ENCODE measurements at regions of chr5 and their contacts with region 1.

Region 1: DNA sequence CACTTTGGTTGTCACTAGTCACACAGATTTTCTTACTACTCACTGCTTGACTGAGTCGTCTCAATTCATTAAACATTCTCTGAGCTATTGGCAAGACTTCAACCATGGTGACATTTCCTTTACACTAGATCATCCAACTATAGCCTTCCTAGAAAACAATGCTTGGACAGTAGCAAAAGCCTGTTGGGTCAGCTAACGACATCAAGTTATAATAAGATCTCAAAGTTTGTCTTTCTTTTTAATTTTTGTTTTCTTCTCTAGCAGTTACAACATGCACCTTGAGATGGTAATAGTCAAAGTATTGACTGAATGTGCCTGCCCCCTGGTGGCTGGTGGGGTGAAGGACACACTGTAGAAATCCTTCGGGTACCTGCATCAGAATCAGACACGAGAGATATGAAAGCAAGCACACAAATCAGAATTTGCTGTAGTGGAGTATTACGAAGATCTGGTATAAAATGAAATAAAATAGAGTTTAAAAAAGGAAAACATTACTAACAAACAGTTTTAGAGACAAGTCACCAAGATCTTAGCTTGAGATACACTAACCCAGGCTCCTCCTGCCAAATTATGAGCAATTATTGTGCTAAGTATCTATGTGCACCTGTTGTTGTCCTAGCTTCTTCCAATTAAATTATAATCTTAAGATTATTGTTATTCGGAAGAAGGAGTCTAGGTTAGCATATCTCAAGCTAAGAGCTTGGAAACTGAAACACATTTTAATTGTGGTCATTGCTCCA is 81.2 kb downstream of the ARL15 start:
- DNase-seq: peak; percentile 76
- ATAC-seq: peak; percentile 40

Region 2: GRCh38 chr5:53123702-53124101 is 1105.5 kb before region 1 on chr5:
- intact Hi-C with region 1: loop called (anchors 5 kb)
- DNase-seq: no peak
- ATAC-seq: no peak

Region 3: DNA sequence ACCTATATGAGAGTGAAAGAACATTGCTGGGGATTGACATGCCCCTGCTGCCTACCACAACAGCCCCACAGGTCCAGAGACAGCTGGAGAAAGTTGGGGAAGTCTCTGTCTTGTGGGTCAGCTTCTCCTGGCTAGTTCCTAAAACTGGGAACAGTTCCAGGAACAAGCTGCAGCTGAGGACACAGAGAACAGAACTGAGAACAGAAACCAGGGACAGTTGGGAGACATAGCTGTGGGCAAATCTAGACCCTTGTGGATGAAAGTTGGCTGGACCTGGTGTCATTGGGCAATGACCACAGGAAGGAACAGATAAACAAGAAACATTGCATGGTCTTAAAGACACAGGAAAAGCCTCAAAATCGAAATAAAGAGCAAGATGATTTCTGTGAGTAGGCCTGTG is 1061.4 kb before region 1 on chr5:
- intact Hi-C with region 1: loop called (anchors 5 kb)
- DNase-seq: peak; percentile 66
- ATAC-seq: peak; percentile 94

Region 4: DNA sequence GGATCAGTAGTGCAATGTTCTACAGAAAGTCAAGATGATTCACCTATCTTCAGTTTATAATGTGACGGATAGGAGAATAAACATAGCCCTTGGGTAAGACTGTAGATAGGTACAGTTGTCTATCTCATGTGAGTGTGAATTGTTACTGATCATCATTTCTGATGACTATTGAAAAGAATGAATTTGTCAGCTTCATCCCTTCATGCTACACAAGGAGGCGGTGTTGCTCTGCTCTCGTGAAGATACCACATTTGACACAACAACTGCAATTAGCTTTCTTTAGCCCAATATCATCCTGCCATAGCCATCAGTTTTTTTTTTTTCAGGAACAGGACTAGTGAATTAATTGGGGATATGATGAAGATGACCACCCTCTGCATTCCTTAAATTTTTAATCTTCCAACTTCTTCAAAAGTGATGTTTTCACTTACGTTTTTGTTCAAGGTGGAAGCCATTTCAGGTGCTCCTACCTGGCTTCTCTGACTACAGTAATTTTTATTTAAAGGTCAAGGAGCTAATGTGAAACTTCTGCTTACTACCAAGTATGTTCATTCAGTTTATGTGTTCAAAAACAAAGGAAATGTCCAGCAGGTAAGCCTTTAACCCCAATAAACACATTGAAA is 966.8 kb before region 1 on chr5:
- intact Hi-C with region 1: loop called (anchors 10 kb)
- DNase-seq: no peak
- ATAC-seq: peak; percentile 67

Region 5: DNA sequence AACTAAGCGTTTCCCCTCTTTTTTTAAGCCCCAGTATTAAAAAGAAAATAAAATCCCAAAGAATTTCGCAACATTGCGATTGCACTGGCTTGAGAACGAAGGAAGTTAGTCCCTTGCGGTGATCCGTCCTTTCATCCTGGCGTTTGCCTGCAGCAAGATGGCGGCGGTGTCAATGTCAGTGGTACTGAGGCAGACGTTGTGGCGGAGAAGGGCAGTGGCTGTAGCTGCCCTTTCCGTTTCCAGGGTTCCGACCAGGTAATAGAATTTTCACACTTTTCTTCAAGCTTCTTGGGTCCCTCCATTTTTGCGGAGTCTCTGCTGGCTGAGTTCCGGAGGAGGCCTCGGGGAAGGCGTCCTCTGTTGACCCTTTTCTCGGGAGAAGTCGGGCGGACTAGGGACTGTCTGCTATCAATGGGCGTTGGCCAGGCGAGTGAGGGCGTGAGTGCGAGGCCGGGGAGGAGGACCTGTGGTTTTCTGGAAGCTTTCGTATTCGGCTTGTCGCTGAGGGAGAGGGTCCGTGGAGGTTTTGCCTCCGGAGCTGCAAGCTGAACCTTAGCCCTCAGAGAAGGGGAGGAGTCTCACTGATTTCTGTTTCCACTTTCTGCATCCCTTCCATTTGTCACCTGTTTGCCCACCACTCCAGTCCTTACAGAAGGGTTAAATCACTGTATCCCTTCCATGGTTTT is 668.6 kb before region 1 on chr5 and contains the start of gene NDUFS4:
- intact Hi-C with region 1: loop called (anchors 10 kb)
- DNase-seq: peak; percentile 84
- ATAC-seq: peak; percentile 94
- total RNA-seq, gene NDUFS4: 224 TPM

Measured in Right ventricle myocardium inferior (tissue), 1 donor.